Activated naive CD4-positive, alpha-beta T cell treated with anti-CD3 and anti-CD28 coated beads for 36 hours (primary cell): ENCODE measurements at regions of chr1 and their contacts with region 1.

Region 1: GRCh38 chr1:84772428-84772943 is 82.2 kb upstream of the SSX2IP start:
- DNase-seq: peak; percentile 86
- H3K4me3 Mint-ChIP-seq: no peak overlapping the region
- H3K27ac Mint-ChIP-seq: no peak overlapping the region
- H3K4me1 Mint-ChIP-seq: no peaks in the 10 kb centered on the region
- H3K27me3 Mint-ChIP-seq: no peaks in the 10 kb centered on the region

Region 2: DNA sequence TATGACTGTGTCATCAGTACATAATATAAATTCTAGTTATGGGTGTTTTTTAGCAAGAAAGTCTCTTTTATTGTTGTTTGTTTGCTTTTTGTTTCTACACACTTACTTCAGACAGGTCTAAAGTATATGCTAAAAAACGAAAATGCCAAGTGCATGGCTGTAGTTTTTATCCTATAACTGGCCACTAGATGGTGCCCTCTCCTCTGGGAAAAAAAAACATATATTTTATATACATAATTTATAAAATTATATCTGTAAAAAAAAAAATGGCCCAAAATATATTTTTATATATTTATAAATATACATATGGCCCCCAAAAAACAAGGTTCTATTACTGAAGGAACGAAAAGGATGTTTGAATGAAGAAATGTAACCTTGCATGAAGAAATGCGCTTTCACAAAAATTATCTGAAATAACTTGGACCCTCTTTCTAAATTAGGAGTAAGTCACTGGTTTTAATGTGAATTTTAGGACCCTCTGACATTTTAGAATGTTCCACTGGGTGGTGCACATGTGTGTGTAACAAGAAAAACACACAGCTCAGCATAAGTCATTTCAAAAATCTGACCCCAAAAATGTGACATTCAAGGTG is 867.1 kb before region 1 on chr1:
- CTCF ChIA-PET with region 1: interaction called, 5 read pairs
- intact Hi-C with region 1: loop called (anchors 5 kb)
- DNase-seq: peak; percentile 10
- H3K4me3 Mint-ChIP-seq: no peak overlapping the region
- H3K27ac Mint-ChIP-seq: no peak overlapping the region
- H3K4me1 Mint-ChIP-seq: no peaks in the 10 kb centered on the region
- H3K27me3 Mint-ChIP-seq: peaks cover 12% of the 10 kb centered on the region

Region 3: DNA sequence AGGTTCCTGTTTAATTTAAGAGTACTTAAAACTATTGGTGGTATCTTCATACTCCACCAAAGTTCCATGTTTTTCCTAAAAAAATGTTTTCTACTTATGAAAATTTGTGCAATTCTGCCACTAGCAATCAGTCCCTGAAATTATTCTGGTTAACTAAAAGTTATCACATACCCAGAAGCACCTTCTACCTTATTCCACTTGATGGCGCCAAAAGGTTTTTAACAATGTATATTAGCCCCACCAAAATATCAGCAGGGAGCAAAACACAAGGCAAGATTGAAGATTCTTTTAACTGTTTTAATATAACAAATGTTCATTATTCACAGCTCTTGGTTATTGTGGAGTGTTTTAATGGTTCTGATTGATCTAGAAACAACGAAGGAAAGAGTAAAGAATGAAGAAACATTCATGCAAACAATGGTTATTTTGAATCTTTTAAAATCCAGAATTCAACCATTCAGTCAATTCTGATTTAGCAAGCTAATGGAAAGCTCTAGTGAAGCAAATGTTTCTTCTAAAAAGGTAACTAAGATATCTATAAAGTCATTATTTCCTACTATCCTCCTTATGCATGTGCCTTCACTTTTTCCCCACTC is 840.7 kb before region 1 on chr1:
- CTCF ChIA-PET with region 1: no interaction called
- intact Hi-C with region 1: loop called (anchors 5 kb)
- DNase-seq: peak; percentile 24
- H3K4me3 Mint-ChIP-seq: no peak overlapping the region
- H3K27ac Mint-ChIP-seq: no peak overlapping the region
- H3K4me1 Mint-ChIP-seq: no peaks in the 10 kb centered on the region
- H3K27me3 Mint-ChIP-seq: peaks cover 8% of the 10 kb centered on the region

Region 4: GRCh38 chr1:84668185-84668584 is 104.3 kb before region 1 on chr1:
- CTCF ChIA-PET with region 1: interaction called, 3 read pairs
- intact Hi-C with region 1: loop called (anchors 5 kb)
- DNase-seq: peak; percentile 13
- H3K4me3 Mint-ChIP-seq: no peak overlapping the region
- H3K27ac Mint-ChIP-seq: no peak overlapping the region
- H3K4me1 Mint-ChIP-seq: peaks cover 5% of the 10 kb centered on the region
- H3K27me3 Mint-ChIP-seq: no peaks in the 10 kb centered on the region

Region 5: GRCh38 chr1:84758968-84759491 is 13.5 kb before region 1 on chr1:
- CTCF ChIA-PET with region 1: interaction called, 19 read pairs
- intact Hi-C with region 1: no loop called
- DNase-seq: peak; percentile 30
- H3K4me3 Mint-ChIP-seq: peak overlapping the region; percentile 38
- H3K27ac Mint-ChIP-seq: no peak overlapping the region
- H3K4me1 Mint-ChIP-seq: peaks cover 10% of the 10 kb centered on the region
- H3K27me3 Mint-ChIP-seq: peaks cover 7% of the 10 kb centered on the region

Region 6: DNA sequence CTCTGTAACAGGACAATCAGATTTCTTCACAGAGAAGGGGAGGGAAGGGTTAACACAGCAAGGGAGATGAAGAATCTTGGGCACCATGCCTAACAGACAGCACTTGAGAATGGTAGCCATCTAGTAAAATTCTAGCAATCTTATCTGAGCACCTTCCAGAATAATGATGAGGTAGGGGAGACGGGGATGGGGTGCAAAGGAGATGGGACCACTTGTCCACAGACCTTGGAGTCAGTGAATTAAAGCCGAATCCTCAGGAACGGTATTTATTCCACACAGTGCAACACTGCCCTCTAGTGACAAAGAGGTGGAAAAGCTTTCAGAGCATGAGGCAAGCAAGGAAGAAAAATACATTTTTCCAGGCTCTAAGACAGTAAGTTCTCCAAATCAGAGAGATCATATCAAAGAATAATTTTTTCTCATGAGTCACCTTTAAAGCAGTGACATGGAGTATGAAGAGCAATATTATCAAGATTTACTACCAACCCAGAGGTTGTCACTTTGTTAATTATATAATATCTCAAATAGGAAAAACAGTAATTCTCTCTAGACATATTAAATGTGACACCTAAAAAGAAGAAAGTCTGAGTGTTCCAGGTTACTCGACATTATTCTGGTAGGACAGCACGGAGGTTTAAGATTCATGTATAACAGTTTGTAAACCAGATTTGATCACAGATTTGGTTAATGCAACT is 163.8 kb after region 1 on chr1:
- CTCF ChIA-PET with region 1: interaction called, 25 read pairs
- intact Hi-C with region 1: loop called (anchors 1 kb)
- DNase-seq: peak; percentile 43
- H3K4me3 Mint-ChIP-seq: no peak overlapping the region
- H3K27ac Mint-ChIP-seq: no peak overlapping the region
- H3K4me1 Mint-ChIP-seq: peaks cover 4% of the 10 kb centered on the region
- H3K27me3 Mint-ChIP-seq: no peaks in the 10 kb centered on the region